Esophagus muscularis mucosa (tissue), 4 donors: ENCODE measurements at regions of chr6 and their contacts with region 1.

Region 1: DNA sequence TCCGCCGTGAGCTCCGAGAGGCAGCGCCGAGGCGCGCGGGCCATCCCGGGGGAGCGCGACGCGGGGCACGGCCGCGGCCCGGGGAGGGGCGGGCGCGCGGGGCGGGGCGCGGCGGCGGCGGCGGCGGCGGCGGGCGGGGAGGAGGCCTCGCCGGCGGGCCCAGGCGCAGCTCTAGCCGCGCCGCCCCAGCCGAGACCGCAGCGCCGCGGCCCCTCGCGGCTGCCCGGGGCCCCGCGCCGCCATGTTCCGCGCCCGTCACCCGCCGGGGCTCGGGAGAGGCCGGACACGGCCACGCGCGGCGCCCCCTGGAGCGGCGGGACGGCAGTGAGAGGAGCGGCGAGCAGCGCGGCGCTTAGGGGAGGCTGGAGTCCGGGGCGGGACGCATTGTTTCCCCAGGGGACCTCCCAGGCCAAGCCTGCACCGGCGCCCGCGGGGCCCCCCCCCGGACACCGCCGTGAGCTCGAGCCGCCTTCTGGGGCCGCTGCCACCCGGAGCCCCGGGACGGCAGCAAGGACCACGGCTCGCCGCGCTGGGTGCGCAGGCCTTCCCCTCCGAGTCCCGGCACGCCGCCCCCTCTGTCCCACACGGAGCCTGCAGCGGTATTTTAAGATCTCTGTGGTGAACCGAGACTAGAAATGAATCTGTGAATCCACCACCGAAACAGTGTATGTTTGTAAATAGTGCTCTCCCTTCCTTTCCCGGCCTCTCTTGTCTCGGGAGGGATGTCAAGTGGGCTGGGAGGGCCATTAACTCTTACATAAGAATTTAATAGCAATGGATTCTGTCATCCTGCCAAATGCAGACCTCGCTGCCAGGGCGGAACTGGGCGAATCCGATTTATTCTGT is at the start of gene KIF13A:
- DNase-seq: peak; percentile 94
- H3K4me3 ChIP-seq: peak within 1 kb of the TSS; percentile 67 to 94 (median 80)
- H3K27ac ChIP-seq: peak within 1 kb of the TSS; percentile 93 to 97 (median 96)
- H3K4me1 ChIP-seq: peaks cover 25 to 49% (median 38%) of the 10 kb centered on the region in 4 donors
- H3K27me3 ChIP-seq: no peaks in the 10 kb centered on the region
- CTCF ChIP-seq: peak; percentile 16 to 40 (median 25)
- EP300 ChIP-seq: no peak
- POLR2A ChIP-seq: no peak
- total RNA-seq, gene KIF13A: 63.8 to 86.3 (median 78.2) TPM

Region 2: GRCh38 chr6:17851001-17851719 is 136.6 kb before region 1 on chr6:
- intact Hi-C with region 1: loop called (anchors 5 kb)
- DNase-seq: no peak
- H3K4me3 ChIP-seq: no peak overlapping the region
- H3K27ac ChIP-seq: peak overlapping the region; percentile 17 to 57 (median 36)
- H3K4me1 ChIP-seq: peaks cover 6 to 28% (median 27%) of the 10 kb centered on the region in 4 donors
- H3K27me3 ChIP-seq: no peaks in the 10 kb centered on the region
- CTCF ChIP-seq: no peak
- EP300 ChIP-seq: no peak
- POLR2A ChIP-seq: no peak

Region 3: GRCh38 chr6:17865798-17866725 is 121.7 kb before region 1 on chr6:
- intact Hi-C with region 1: loop called (anchors 5 kb)
- DNase-seq: peak; percentile 92
- H3K4me3 ChIP-seq: no peak overlapping the region
- H3K27ac ChIP-seq: peak overlapping the region; percentile 61 to 78 (median 70)
- H3K4me1 ChIP-seq: peaks cover 44 to 84% (median 74%) of the 10 kb centered on the region in 4 donors
- H3K27me3 ChIP-seq: no peaks in the 10 kb centered on the region
- CTCF ChIP-seq: no peak
- EP300 ChIP-seq: no peak
- POLR2A ChIP-seq: no peak

Region 4: GRCh38 chr6:17907406-17908229 is 80.2 kb before region 1 on chr6:
- intact Hi-C with region 1: no loop called
- DNase-seq: peak; percentile 94
- H3K4me3 ChIP-seq: no peak overlapping the region
- H3K27ac ChIP-seq: peak overlapping the region; percentile 22 to 52 (median 30)
- H3K4me1 ChIP-seq: peaks cover 52 to 72% (median 70%) of the 10 kb centered on the region in 4 donors
- H3K27me3 ChIP-seq: no peaks in the 10 kb centered on the region
- CTCF ChIP-seq: no peak
- EP300 ChIP-seq: no peak
- POLR2A ChIP-seq: no peak

Region 5: DNA sequence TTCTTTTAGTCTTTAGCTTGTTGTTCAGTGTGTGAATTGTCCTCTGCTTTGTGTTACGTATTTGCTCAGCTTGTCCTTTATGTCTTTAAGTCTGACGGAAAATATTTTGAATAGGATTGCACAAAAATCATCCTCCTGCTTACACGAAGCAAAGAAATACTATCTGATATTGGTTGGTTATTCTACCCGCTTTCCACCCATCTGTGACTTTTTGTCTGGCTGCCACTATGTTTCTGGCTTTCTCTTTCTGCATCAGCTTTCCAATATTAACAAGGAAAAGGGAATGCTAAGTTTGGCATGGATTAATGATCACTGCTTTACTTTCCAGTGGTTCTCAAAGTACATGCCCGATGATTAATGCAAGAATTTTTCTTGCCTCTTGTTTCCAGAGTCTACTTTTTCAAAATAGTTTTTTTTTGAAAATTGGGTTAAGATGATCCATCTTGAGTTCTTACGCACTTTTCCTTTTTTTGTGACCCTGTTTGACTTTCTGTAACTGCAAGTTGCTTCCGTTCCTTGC is 456.3 kb after region 1 on chr6:
- intact Hi-C with region 1: no loop called
- DNase-seq: no peak
- H3K4me3 ChIP-seq: peak overlapping the region; percentile 0 to 24 (median 12)
- H3K27ac ChIP-seq: peak overlapping the region in 3 of 4 donors; percentile 8 to 55 (median 11)
- H3K4me1 ChIP-seq: peaks cover 0 to 15% (median 11%) of the 10 kb centered on the region in 4 donors
- H3K27me3 ChIP-seq: no peaks in the 10 kb centered on the region
- CTCF ChIP-seq: no peak
- EP300 ChIP-seq: no peak
- POLR2A ChIP-seq: no peak